ENCODE measurements at regions of chr1 and their contacts with region 1.

Region 1: DNA sequence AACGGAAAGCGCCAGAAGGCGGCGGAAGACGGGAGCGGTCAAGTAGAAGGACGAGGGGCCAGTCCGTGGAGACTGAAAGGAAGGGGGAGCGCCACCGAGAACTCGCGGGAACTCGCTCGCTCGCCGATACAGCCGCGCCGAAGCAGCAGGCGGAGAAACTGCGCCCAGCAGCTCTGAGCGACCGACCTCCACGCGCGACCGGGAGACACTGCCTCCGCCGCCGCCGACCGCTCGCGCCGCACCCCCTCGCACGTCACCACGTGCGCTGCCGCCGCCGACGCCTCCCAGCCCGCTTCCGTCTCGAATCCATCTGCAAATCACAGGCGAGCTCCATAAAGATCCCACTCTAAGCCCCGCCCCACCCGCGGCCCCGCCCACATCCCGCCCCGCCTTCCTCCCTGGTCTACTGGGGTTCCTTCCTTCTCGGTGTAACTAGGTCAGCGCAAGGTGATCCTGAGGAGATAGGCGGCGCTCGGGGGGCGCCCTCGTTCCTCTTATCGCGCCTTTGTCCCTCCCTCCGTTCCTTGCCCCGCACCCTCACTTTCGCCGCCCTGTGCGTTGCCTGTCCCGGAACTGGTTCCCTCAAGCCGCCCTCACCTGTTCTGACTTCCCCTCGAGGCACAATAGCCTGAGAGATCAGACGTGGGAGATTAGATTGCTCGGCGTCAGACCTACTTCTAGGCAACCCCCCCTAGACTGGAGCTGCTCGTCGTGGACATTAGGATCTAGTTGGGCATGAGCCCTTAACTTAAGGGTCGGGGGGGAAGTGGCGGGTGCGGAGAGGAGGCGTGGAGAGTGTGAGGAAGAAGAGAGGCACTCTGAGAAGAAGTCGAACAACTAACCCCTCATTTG is at the start of gene IVNS1ABP:
- DNase-seq: peak; percentile 96
- H3K4me3 ChIP-seq: peak within 1 kb of the TSS; percentile 66 to 98 (median 94)
- H3K27ac ChIP-seq: peak within 1 kb of the TSS; percentile 87
- H3K4me1 ChIP-seq: peaks cover 36% of the 10 kb centered on the region
- H3K27me3 ChIP-seq: no peaks in the 10 kb centered on the region
- CTCF ChIP-seq: peak in 1 of 2 donors; percentile 19
- POLR2A ChIP-seq: peak; percentile 96
- total RNA-seq, gene IVNS1ABP: 75.3 and 81.6 TPM in 2 replicates

Region 2: GRCh38 chr1:184805667-184806295 is 511.5 kb before region 1 on chr1:
- CTCF ChIA-PET with region 1: no interaction called
- POLR2A ChIA-PET with region 1: no interaction called
- dilution Hi-C with region 1: no loop called
- intact Hi-C with region 1: loop called (anchors 5 kb)
- DNase-seq: peak; percentile 83
- H3K4me3 ChIP-seq: no peak overlapping the region
- H3K27ac ChIP-seq: no peak overlapping the region
- H3K4me1 ChIP-seq: peaks cover 4% of the 10 kb centered on the region
- H3K27me3 ChIP-seq: no peaks in the 10 kb centered on the region
- CTCF ChIP-seq: peak; percentile 91 to 93
- POLR2A ChIP-seq: no peak

Region 3: GRCh38 chr1:185373813-185374529 is 56.7 kb after region 1 on chr1:
- CTCF ChIA-PET with region 1: interaction called, 17 read pairs
- POLR2A ChIA-PET with region 1: interaction called, 9 read pairs
- dilution Hi-C with region 1: no loop called
- intact Hi-C with region 1: loop called (anchors 1 kb)
- DNase-seq: peak; percentile 93
- H3K4me3 ChIP-seq: peak overlapping the region in 1 of 3 experiments; percentile 55
- H3K27ac ChIP-seq: peak overlapping the region; percentile 97
- H3K4me1 ChIP-seq: peaks cover 48% of the 10 kb centered on the region
- H3K27me3 ChIP-seq: no peaks in the 10 kb centered on the region
- CTCF ChIP-seq: no peak
- POLR2A ChIP-seq: no peak

Region 4: DNA sequence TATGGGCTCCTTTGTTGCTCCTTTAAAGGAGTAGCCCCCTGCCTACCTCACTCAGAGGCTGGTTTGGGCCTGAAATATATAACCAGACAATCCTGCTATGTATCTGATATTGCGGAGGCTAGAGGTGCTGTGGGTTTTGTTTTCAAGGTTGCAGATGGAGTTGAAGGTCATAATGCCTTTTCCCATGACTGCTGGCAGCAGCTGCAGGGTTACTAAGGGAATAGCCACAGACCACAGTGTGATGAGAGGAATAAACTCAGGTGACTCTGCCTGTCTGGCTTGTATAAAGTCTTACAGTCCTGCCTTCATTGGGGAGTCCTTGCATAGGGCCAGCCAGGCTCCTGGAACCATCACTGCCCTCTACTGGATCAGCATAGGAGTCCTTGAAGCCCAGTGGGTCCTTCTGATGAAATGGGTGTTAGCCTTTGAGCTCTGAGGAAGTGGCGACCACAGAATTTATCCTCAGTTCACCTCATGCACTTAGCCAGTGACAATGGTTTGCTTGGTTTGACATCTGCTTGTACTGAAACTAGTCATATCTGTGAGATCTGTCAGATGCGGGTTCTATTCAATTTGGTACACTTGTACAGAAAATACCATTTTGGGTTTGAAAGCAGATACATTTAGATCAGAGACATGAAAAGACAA is 242.5 kb after region 1 on chr1:
- CTCF ChIA-PET with region 1: interaction called, 10 read pairs
- POLR2A ChIA-PET with region 1: no interaction called
- dilution Hi-C with region 1: no loop called
- intact Hi-C with region 1: no loop called
- DNase-seq: peak; percentile 51
- H3K4me3 ChIP-seq: no peak overlapping the region
- H3K27ac ChIP-seq: no peak overlapping the region
- H3K4me1 ChIP-seq: no peaks in the 10 kb centered on the region
- H3K27me3 ChIP-seq: no peaks in the 10 kb centered on the region
- CTCF ChIP-seq: peak; percentile 22 to 46
- POLR2A ChIP-seq: no peak

Region 5: DNA sequence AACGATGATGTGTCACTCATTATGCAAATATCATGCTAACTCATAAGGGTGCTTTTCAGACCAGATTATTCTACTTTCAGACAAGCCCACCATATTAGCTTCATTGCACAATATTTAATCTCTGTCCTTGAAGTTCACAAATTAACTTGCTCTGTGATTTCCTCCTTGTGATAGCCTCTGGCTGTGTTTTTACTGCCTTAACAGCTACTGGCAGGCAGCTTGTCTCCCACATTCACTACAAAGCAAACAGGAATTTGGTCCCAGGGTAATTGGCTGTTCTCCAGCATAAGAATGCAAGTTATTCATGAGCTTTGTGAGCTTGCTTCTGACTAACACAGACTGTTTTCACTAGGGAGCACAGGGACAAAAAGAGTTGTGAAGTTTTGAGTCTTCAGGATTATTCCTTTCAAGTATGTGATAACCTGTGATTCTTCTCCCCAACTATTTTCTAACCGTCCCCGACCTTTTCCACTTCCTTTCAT is 329.0 kb after region 1 on chr1:
- CTCF ChIA-PET with region 1: interaction called, 8 read pairs
- POLR2A ChIA-PET with region 1: interaction called, 3 read pairs
- dilution Hi-C with region 1: no loop called
- intact Hi-C with region 1: loop called (anchors 2 kb)
- DNase-seq: peak; percentile 99
- H3K4me3 ChIP-seq: peak overlapping the region in 1 of 3 experiments; percentile 27
- H3K27ac ChIP-seq: peak overlapping the region; percentile 72
- H3K4me1 ChIP-seq: peaks cover 23% of the 10 kb centered on the region
- H3K27me3 ChIP-seq: no peaks in the 10 kb centered on the region
- CTCF ChIP-seq: no peak
- POLR2A ChIP-seq: no peak

Region 6: DNA sequence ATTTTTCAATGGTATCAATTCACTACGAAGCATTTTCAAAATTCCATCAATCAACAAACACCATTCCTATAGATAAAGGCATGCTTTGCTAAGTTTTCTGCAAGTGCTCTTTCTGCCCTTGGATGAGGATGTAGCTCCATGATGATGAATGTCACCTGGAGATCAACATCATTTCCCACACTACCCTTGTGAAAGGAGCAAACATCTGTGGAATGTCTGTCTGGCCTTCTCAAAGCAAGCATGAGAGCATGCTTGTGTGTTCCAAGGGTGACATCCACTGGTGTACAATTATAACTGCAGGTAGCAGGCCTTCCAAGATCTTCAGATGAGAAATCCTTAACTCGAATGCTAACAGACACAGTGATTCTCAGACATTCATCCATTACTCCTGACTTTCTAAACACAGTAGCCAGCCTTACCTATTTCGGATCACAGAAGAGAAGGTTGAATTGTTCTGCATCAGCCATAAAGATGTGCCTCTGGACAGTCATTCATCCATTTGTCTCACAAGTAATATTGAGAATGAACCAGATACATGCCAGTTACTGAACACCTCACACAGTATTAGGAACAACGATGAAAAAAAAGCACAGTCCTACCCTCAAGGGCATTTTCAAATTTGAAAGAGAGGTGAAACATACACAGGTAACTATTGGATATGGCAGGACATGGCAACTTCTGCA is 895.4 kb after region 1 on chr1:
- CTCF ChIA-PET with region 1: no interaction called
- POLR2A ChIA-PET with region 1: no interaction called
- dilution Hi-C with region 1: no loop called
- intact Hi-C with region 1: loop called (anchors 1 kb)
- DNase-seq: peak; percentile 88
- H3K4me3 ChIP-seq: no peak overlapping the region
- H3K27ac ChIP-seq: no peak overlapping the region
- H3K4me1 ChIP-seq: peaks cover 4% of the 10 kb centered on the region
- H3K27me3 ChIP-seq: no peaks in the 10 kb centered on the region
- CTCF ChIP-seq: peak; percentile 73 to 77
- POLR2A ChIP-seq: no peak

Measured in endothelial cell of umbilical vein (primary cell).